Activated B cell treated with CpG ODN at 0.5 μM for 24 hours (primary cell): ENCODE measurements at regions of chr2 and their contacts with region 1.

Region 1: GRCh38 chr2:229921892-229922445 is at the start of gene TRIP12:
- DNase-seq: peak; percentile 94
- ATAC-seq: peak; percentile 76
- H3K4me3 Mint-ChIP-seq: peak within 1 kb of the TSS; percentile 94
- H3K27ac Mint-ChIP-seq: peak within 1 kb of the TSS; percentile 96
- H3K4me1 Mint-ChIP-seq: peaks cover 42% of the 10 kb centered on the region
- H3K27me3 Mint-ChIP-seq: no peaks in the 10 kb centered on the region
- CTCF ChIP-seq: no peak
- total RNA-seq, gene TRIP12: 255 and 272 TPM in 2 replicates

Region 2: DNA sequence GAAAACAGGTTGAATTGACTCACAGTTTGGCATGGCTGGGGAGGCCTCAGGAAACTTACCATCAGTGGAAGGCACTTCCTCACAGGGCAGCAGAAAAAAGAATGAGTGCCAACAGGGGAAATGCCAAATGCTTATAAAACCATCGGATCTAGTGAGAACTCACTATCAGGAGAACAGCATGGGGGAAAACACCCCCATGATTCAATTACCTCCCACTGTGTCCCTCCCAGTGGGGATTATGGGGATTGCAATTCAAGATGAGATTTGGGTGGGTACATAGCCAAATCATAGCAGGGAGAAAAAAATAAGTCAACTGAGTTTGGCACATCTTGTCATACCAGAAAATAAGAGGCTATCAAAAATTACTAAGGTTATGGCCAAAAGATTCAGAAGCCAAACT is 96.5 kb before region 1 on chr2:
- CTCF ChIA-PET with region 1: no interaction called
- POLR2A ChIA-PET with region 1: no interaction called
- intact Hi-C with region 1: loop called (anchors 1 kb)
- DNase-seq: no peak
- ATAC-seq: no peak
- H3K4me3 Mint-ChIP-seq: no peak overlapping the region
- H3K27ac Mint-ChIP-seq: no peak overlapping the region
- H3K4me1 Mint-ChIP-seq: peaks cover 17% of the 10 kb centered on the region
- H3K27me3 Mint-ChIP-seq: no peaks in the 10 kb centered on the region
- CTCF ChIP-seq: no peak

Region 3: DNA sequence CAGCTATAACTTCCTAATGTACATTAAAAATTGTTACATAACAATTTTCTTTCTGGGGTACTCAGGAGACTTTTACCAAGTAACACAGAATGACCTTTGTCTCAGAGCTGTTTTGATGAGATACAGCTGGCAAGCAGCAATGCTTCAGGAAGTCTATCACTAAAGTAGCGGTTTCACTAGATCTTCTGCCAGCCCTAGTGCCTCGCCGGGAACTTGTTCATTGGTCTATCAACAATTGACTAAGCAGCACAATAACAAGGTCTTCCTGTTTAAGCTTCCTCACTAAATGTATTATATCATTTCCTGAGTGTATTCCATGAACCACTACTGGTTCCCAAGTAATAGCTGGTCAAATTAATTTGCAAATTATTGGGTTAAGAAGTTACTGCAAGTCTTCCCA is 69.4 kb before region 1 on chr2:
- CTCF ChIA-PET with region 1: no interaction called
- POLR2A ChIA-PET with region 1: no interaction called
- intact Hi-C with region 1: loop called (anchors 2 kb)
- DNase-seq: no peak
- ATAC-seq: peak; percentile 54
- H3K4me3 Mint-ChIP-seq: no peak overlapping the region
- H3K27ac Mint-ChIP-seq: no peak overlapping the region
- H3K4me1 Mint-ChIP-seq: peaks cover 53% of the 10 kb centered on the region
- H3K27me3 Mint-ChIP-seq: no peaks in the 10 kb centered on the region
- CTCF ChIP-seq: no peak

Region 4: DNA sequence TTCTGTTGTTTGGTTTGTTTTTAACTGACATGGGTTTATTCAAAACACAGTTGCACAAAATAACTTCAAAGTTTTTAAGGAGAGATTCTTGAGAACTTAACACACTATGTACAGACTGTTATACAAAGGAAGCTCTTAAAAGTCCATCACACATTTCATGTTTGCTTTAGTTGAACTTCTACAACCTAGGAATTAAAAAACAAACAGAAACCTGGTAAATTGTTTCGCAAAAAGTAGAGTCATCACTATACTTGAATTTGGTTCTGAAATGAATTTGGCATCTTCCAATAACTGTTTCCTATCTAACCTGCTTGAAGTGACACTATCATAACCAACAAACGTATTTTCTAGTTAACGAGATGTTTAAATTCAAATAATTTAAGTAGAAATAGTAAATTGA is 22.0 kb before region 1 on chr2:
- CTCF ChIA-PET with region 1: no interaction called
- POLR2A ChIA-PET with region 1: interaction called, 18 read pairs
- intact Hi-C with region 1: no loop called
- DNase-seq: no peak
- ATAC-seq: no peak
- H3K4me3 Mint-ChIP-seq: no peak overlapping the region
- H3K27ac Mint-ChIP-seq: no peak overlapping the region
- H3K4me1 Mint-ChIP-seq: peaks cover 32% of the 10 kb centered on the region
- H3K27me3 Mint-ChIP-seq: no peaks in the 10 kb centered on the region
- CTCF ChIP-seq: no peak

Region 5: DNA sequence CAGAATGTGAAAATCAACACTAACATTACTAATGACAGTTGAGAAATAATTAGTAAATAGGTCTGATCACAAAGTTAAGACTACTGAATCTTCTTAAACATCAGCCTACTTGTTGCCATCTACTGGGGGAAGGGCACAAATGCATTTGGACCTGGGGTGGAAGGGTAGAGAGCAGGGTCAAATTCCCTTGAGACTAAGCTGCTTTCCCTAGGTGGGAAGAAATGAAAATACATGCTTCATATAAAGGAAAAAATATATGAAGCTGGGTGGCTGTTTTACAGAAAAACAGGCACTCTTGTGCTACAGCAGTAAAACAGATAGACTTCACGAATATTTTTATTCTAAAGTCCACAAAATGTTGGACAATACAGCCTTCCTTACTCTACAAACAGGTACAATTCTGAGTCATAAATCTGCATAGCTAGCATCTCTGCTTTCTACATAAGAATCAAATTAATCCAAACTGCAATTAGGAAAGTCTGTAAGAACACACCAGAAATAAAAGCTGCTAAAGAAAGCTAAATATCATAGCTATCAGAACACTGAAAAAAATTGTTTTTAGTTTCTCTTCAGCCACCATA is 11.0 kb before region 1 on chr2:
- CTCF ChIA-PET with region 1: interaction called, 4 read pairs
- POLR2A ChIA-PET with region 1: interaction called, 23 read pairs
- intact Hi-C with region 1: loop called (anchors 1 kb)
- DNase-seq: no peak
- ATAC-seq: peak; percentile 92
- H3K4me3 Mint-ChIP-seq: peak overlapping the region; percentile 32
- H3K27ac Mint-ChIP-seq: peak overlapping the region; percentile 19
- H3K4me1 Mint-ChIP-seq: peaks cover 58% of the 10 kb centered on the region
- H3K27me3 Mint-ChIP-seq: no peaks in the 10 kb centered on the region
- CTCF ChIP-seq: no peak